ENCODE measurements at regions of chr2 and their contacts with region 1.

Region 1: DNA sequence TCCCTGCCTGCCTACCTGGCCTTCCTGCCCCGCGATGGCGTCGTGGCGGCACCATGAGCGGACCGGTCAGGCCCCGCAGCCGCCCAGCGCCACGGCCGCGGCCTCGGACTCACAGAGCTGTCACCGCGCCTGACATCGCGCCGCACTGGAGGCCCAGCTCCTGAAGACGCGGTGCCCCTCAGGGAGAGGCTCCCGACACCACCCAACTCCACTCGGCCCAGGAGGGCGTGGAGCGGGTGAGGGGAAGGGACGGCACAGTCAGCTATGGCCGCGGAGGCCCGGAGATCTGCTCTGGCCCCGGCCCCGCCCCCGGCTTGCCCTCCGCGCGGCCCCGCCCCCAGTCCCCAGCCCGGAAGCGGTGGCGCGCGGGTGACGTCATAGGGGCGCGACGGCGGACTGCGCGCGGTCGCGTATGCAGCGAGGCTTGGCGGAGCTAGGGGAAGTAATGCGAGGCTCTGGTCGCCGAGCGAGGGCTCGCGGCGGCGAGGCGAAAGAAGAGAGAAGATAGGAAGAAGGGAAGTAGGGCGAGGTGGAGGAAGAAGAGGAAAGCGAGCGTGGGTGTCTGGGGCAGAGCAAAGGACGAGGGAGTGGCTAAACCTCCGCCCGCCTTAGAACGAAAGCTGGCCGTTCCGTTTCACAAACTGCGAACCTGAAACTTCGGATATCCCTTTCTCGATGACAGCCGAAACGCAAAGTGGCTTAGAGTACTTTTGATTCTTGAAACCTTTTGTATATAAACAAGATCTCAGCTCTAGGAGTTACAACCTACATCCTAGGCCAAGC is at the start of gene SLC35F5:
- DNase-seq: peak; percentile 98
- ATAC-seq: peak; percentile 86
- H3K4me3 ChIP-seq: peak within 1 kb of the TSS; percentile 75 to 97 (median 91)
- H3K4me3 Mint-ChIP-seq: peak within 1 kb of the TSS; percentile 92
- H3K27ac ChIP-seq: peak within 1 kb of the TSS; percentile 87
- H3K27ac Mint-ChIP-seq: peak within 1 kb of the TSS; percentile 98
- H3K4me1 ChIP-seq: peaks cover 14 to 18% of the 10 kb centered on the region in 2 donors
- H3K4me1 Mint-ChIP-seq: peaks cover 30% of the 10 kb centered on the region
- H3K27me3 ChIP-seq: no peaks in the 10 kb centered on the region
- H3K27me3 Mint-ChIP-seq: no peaks in the 10 kb centered on the region
- CTCF ChIP-seq: no peak
- total RNA-seq, gene SLC35F5: 75.5 and 78.4 TPM in 2 replicates

Region 2: DNA sequence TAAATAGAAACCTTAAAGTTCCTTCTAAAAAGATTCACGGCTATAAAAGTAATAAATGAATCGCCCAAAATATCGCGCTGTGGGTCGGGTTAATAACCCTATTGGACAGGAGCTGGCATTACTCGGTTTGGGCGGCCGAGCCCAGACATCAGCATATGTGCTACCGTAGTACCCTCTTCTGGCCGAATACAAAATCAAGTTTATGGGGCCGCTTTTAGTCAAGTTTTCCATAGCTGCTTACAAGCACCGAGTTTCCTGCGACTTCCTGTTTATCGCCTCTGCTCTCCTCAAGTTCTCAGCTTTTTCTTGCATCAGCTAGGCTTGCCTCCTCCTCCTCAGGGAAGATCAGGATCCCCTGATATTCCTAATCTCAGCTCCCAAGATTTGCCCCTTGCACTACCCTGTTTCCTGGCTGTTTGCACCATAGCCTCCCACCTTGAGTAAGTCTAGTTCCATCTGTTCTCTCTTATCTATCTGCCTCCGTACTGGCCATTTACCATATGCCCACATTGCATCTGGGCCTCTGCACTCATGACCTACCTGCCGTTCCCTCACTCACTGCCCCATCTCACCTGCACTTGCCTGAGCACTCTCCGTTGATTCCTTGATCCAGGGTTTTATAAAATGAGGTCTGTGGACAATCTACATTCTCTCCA is 56.2 kb before region 1 on chr2:
- CTCF ChIA-PET with region 1: interaction called, 14 read pairs
- POLR2A ChIA-PET with region 1: interaction called, 7 read pairs
- intact Hi-C with region 1: no loop called
- DNase-seq: peak; percentile 77
- ATAC-seq: peak; percentile 92
- H3K4me3 ChIP-seq: peak overlapping the region in 3 of 5 experiments; percentile 23 to 38 (median 27)
- H3K4me3 Mint-ChIP-seq: peak overlapping the region; percentile 73
- H3K27ac ChIP-seq: no peak overlapping the region
- H3K27ac Mint-ChIP-seq: peak overlapping the region; percentile 64
- H3K4me1 ChIP-seq: peaks cover 17 to 20% of the 10 kb centered on the region in 2 donors
- H3K4me1 Mint-ChIP-seq: peaks cover 28% of the 10 kb centered on the region
- H3K27me3 ChIP-seq: no peaks in the 10 kb centered on the region
- H3K27me3 Mint-ChIP-seq: no peaks in the 10 kb centered on the region
- CTCF ChIP-seq: peak; percentile 74

Region 3: GRCh38 chr2:113831161-113831560 is 74.6 kb after region 1 on chr2:
- CTCF ChIA-PET with region 1: no interaction called
- POLR2A ChIA-PET with region 1: no interaction called
- intact Hi-C with region 1: no loop called
- DNase-seq: no peak
- ATAC-seq: no peak
- H3K4me3 ChIP-seq: no peak overlapping the region
- H3K4me3 Mint-ChIP-seq: no peak overlapping the region
- H3K27ac ChIP-seq: no peak overlapping the region
- H3K27ac Mint-ChIP-seq: no peak overlapping the region
- H3K4me1 ChIP-seq: peaks cover 5 to 6% of the 10 kb centered on the region in 2 donors
- H3K4me1 Mint-ChIP-seq: peaks cover 7% of the 10 kb centered on the region
- H3K27me3 ChIP-seq: no peaks in the 10 kb centered on the region
- H3K27me3 Mint-ChIP-seq: no peaks in the 10 kb centered on the region
- CTCF ChIP-seq: no peak

Region 4: GRCh38 chr2:113858764-113859163 is 102.2 kb after region 1 on chr2:
- CTCF ChIA-PET with region 1: interaction called, 5 read pairs
- POLR2A ChIA-PET with region 1: interaction called, 7 read pairs
- intact Hi-C with region 1: loop called (anchors 1 kb)
- DNase-seq: no peak
- ATAC-seq: no peak
- H3K4me3 ChIP-seq: peak overlapping the region in 1 of 5 experiments; percentile 44
- H3K4me3 Mint-ChIP-seq: peak overlapping the region; percentile 35
- H3K27ac ChIP-seq: peak overlapping the region; percentile 89 to 96
- H3K27ac Mint-ChIP-seq: peak overlapping the region; percentile 70
- H3K4me1 ChIP-seq: peaks cover 83 to 88% of the 10 kb centered on the region in 2 donors
- H3K4me1 Mint-ChIP-seq: peaks cover 84% of the 10 kb centered on the region
- H3K27me3 ChIP-seq: no peaks in the 10 kb centered on the region
- H3K27me3 Mint-ChIP-seq: no peaks in the 10 kb centered on the region
- CTCF ChIP-seq: no peak

Region 5: DNA sequence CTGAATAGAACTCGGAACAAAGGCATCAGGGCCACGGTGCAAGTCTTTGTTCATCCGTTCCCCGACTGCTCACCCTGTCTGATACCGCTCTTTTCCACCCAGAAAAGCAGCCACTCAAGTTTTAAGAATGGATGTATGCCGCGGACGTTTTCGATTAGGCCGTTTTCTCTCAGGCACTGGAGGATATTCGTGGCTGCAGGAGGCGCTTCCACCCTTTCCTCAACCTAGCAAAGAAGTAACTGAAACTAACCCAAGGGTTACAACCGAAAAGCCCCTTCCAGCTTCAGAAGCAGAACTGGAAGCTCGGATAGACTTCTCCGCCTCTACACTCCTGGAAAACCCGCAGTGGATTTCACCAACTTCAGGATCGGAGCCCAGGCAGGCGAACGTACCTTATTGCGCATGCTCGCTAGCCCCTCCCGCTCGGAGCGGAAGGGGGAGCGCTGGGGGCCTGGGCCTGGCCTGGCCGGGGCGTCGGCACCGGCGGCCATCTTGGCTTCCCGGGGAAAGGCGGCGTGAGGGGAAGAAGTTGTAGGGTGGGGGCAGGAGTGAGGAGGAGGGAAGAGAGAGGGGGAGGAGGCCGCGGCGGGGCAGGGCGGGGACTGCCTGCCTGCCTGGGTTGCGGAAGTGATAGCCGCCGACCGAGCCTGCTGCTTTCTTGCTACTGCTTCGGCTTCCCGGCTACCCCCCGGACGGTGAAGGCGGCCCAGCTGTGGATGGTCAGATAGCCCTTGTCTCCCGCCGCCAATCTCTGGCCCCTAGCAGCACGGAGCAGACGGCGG is 133.1 kb after region 1 on chr2 and contains the start of gene ACTR3:
- CTCF ChIA-PET with region 1: interaction called, 6 read pairs
- POLR2A ChIA-PET with region 1: interaction called, 33 read pairs
- intact Hi-C with region 1: loop called (anchors 1 kb)
- DNase-seq: peak; percentile 100
- ATAC-seq: peak; percentile 82
- H3K4me3 ChIP-seq: peak within 1 kb of the TSS; percentile 79 to 96 (median 93)
- H3K4me3 Mint-ChIP-seq: peak within 1 kb of the TSS; percentile 99
- H3K27ac ChIP-seq: peak within 1 kb of the TSS; percentile 94 to 98
- H3K27ac Mint-ChIP-seq: peak within 1 kb of the TSS; percentile 98
- H3K4me1 ChIP-seq: peaks cover 63 to 66% of the 10 kb centered on the region in 2 donors
- H3K4me1 Mint-ChIP-seq: peaks cover 79% of the 10 kb centered on the region
- H3K27me3 ChIP-seq: no peaks in the 10 kb centered on the region
- H3K27me3 Mint-ChIP-seq: no peaks in the 10 kb centered on the region
- CTCF ChIP-seq: peak; percentile 16
- total RNA-seq, gene ACTR3: 240 and 249 TPM in 2 replicates

Region 6: GRCh38 chr2:113922784-113923183 is 166.2 kb after region 1 on chr2:
- CTCF ChIA-PET with region 1: no interaction called
- POLR2A ChIA-PET with region 1: no interaction called
- intact Hi-C with region 1: loop called (anchors 1 kb)
- DNase-seq: no peak
- ATAC-seq: no peak
- H3K4me3 ChIP-seq: no peak overlapping the region
- H3K4me3 Mint-ChIP-seq: no peak overlapping the region
- H3K27ac ChIP-seq: peak overlapping the region; percentile 19 to 78
- H3K27ac Mint-ChIP-seq: no peak overlapping the region
- H3K4me1 ChIP-seq: peaks cover 27 to 39% of the 10 kb centered on the region in 2 donors
- H3K4me1 Mint-ChIP-seq: peaks cover 35% of the 10 kb centered on the region
- H3K27me3 ChIP-seq: no peaks in the 10 kb centered on the region
- H3K27me3 Mint-ChIP-seq: no peaks in the 10 kb centered on the region
- CTCF ChIP-seq: no peak

Region 7: DNA sequence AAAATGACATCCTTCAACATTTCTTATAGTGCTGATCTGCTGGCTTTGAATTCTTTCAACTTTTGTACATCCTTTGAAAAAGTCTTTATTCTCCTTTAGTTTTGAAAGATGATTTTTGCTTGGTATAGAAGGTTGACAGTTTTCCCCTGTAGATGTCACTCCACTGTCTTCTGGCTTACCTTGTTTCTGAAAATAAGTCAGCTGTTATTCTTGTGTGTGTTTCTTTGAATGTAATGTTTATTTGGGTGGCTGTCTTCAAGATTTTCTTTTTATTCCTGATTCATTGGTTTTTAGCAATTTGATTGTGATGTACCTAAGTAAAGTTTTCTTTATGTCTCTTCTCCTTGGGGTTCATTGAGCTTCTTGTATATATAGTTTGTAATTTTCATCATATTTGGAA is 181.0 kb after region 1 on chr2:
- CTCF ChIA-PET with region 1: interaction called, 3 read pairs
- POLR2A ChIA-PET with region 1: no interaction called
- intact Hi-C with region 1: loop called (anchors 5 kb)
- DNase-seq: no peak
- ATAC-seq: no peak
- H3K4me3 ChIP-seq: no peak overlapping the region
- H3K4me3 Mint-ChIP-seq: no peak overlapping the region
- H3K27ac ChIP-seq: peak overlapping the region in 1 of 2 donors; percentile 16
- H3K27ac Mint-ChIP-seq: peak overlapping the region; percentile 23
- H3K4me1 ChIP-seq: no peaks in the 10 kb centered on the region
- H3K4me1 Mint-ChIP-seq: peaks cover 7% of the 10 kb centered on the region
- H3K27me3 ChIP-seq: no peaks in the 10 kb centered on the region
- H3K27me3 Mint-ChIP-seq: no peaks in the 10 kb centered on the region
- CTCF ChIP-seq: no peak